B cell (primary cell): ENCODE measurements at regions of chr6 and their contacts with region 1.

Region 1: DNA sequence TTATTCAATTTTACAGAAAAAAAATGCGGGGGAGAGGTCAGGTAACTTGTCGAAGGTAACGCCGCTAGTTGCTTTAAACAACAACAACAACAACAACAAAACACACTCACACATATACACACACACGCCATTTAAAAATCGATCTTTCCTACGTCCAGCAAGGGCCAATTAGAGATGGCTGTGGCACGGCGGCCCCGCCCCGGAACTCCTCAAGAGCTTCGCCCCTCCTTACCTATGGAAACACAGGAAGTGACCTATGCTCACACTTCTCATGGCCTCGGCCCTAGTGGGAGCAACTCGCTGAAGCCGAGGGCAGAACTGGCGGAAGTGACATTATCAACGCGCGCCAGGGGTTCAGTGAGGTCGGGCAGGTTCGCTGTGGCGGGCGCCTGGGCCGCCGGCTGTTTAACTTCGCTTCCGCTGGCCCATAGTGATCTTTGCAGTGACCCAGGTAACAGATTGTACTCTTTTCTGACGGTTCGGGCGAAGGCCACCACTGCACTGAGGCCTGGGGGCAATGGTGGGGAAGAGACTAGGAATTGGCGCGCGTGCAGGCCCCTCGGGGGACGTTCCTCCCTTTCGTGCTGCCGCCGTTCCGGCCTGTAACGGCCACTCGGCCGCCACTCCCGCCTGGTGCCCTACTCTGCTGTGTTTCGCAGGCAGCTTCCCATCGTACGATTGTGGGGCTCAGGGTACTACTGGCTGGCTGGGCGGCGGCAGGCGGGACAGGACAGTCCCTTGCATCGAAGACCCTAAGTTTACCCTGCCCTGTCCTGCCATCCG is at the start of gene TBP:
- DNase-seq: peak; percentile 97
- ATAC-seq: peak; percentile 94
- H3K4me3 ChIP-seq: peak within 1 kb of the TSS; percentile 71 to 99 (median 85)
- H3K4me3 Mint-ChIP-seq: no peak within 1 kb of the TSS
- H3K27ac ChIP-seq: peak within 1 kb of the TSS; percentile 91 to 92
- H3K27ac Mint-ChIP-seq: no peak within 1 kb of the TSS
- H3K4me1 ChIP-seq: peaks cover 27 to 28% of the 10 kb centered on the region in 2 donors
- H3K4me1 Mint-ChIP-seq: peaks cover 30% of the 10 kb centered on the region
- H3K27me3 ChIP-seq: no peaks in the 10 kb centered on the region
- H3K27me3 Mint-ChIP-seq: no peaks in the 10 kb centered on the region
- CTCF ChIP-seq: no peak
- total RNA-seq, gene TBP: 24.7 and 29.5 TPM in 2 replicates

Region 2: DNA sequence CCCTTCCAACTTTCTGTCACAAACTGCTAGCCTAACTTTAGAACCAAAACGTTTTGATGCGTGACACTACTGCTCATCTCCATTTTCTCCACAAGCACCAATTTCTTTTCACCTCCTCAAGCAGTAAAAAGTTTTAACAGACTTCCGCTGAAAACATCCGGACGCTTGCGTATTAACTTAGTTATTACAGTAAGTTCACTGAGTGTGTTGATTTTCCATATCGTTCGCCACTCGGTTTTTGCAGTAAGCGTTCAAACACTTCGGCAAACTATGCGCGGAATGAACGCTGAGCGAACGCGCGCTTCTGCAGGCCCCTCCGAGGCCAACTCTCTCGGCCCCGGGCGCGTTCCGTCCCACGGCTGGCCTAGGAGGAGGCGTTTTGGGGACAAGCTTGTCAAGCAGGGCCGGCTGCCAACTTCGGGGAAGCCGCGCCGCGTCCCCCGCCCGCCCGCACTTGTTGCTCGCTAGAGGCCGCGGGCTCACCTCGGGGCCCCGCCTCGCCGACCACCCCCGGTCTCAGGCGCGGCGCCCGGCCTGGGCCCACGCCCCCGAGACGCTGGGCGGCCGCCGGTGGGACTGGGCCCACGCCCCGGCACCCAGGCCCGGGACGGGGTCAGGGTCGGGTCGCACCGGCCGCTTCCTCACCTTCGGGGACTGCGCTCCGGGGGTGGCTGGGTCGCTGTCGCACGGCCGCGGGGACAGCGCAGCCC is 830.8 kb before region 1 on chr6:
- CTCF ChIA-PET with region 1: no interaction called
- POLR2A ChIA-PET with region 1: interaction called, 3 read pairs
- intact Hi-C with region 1: loop called (anchors 1 kb)
- DNase-seq: peak; percentile 85
- ATAC-seq: peak; percentile 39
- H3K4me3 ChIP-seq: peak overlapping the region; percentile 58 to 95 (median 77)
- H3K4me3 Mint-ChIP-seq: peak overlapping the region; percentile 90
- H3K27ac ChIP-seq: peak overlapping the region; percentile 77 to 88
- H3K27ac Mint-ChIP-seq: peak overlapping the region; percentile 89
- H3K4me1 ChIP-seq: peaks cover 17 to 18% of the 10 kb centered on the region in 2 donors
- H3K4me1 Mint-ChIP-seq: peaks cover 33% of the 10 kb centered on the region
- H3K27me3 ChIP-seq: no peaks in the 10 kb centered on the region
- H3K27me3 Mint-ChIP-seq: no peaks in the 10 kb centered on the region
- CTCF ChIP-seq: no peak

Region 3: DNA sequence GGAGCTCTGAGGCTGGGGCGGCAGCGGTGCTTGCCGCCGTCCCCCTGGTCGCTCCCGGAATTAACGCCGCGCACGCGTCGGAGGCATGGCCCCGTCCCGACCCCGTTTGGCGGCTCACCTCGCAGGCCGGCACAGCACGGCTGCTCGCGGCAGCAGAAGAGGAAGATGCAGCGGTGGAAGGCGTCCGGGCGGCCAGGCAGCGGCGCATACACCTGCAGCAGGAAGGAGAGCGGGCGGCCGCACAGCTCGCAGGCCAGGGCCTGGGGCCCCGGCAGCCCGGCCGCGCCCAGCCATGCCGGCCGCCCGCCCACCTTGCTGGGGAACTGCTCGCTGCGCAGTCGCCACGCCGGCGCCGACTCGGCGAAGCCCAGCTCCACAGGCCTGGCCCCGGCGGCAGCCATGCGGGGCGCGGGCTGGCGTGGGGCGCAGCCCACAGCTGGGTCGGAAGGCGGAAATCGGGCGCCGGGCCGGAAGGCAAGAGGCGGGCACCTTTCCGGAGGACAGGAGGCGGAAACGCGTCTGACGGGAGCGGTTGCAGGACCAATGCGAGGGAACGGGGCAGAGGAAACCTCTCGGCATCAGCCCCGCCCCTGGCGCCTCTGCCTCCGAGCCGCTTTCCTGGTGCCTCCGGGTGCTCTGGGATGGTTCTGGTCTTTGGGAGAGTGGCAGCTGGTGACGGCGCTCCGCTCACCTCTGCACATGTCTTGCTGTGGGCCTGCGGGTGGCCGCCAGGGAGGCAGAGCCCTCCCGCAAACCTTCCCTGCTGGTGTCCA is 30.2 kb after region 1 on chr6 and contains the start of gene PDCD2:
- CTCF ChIA-PET with region 1: interaction called, 5 read pairs
- POLR2A ChIA-PET with region 1: interaction called, 19 read pairs
- intact Hi-C with region 1: loop called (anchors 1 kb)
- DNase-seq: peak; percentile 93
- ATAC-seq: peak; percentile 93
- H3K4me3 ChIP-seq: peak within 1 kb of the TSS; percentile 76 to 85 (median 82)
- H3K4me3 Mint-ChIP-seq: peak within 1 kb of the TSS; percentile 98
- H3K27ac ChIP-seq: peak within 1 kb of the TSS; percentile 82 to 86
- H3K27ac Mint-ChIP-seq: peak within 1 kb of the TSS; percentile 96
- H3K4me1 ChIP-seq: peaks cover 14 to 16% of the 10 kb centered on the region in 2 donors
- H3K4me1 Mint-ChIP-seq: peaks cover 25% of the 10 kb centered on the region
- H3K27me3 ChIP-seq: peaks cover 0 to 7% (median 0%) of the 10 kb centered on the region in 4 experiments
- H3K27me3 Mint-ChIP-seq: no peaks in the 10 kb centered on the region
- CTCF ChIP-seq: no peak
- total RNA-seq, gene PDCD2: 64.5 and 71.0 TPM in 2 replicates